ENCODE measurements at regions of chr1 and their contacts with region 1.

Region 1: DNA sequence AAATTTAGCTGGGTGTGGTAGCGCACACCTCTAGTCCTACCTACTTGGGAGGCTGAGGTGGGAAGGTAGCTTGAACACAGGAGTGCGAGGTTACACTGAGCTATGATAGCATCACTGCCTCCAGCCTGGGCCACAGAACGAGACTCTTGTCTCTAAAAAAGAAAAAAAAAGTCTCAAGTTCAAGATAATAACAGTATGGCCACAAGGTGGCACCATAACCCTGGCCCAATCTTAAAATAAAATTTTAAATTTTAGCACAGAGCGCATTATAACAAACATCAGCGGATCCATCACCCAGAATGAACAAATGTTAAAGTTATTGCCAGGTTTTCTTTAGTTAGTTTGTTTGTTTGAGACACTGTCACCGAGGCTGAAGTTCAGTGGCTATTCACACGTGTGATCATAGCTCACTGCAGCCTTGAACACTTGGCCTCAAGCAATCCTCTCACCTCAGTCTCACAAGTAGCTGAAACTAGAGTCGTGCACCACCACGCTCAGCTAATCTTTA is 2.9 kb upstream of the HTR6 start:
- DNase-seq: peak; percentile 68
- ATAC-seq: no peak
- H3K4me3 Mint-ChIP-seq: no peak overlapping the region
- H3K27ac Mint-ChIP-seq: no peak overlapping the region
- H3K4me1 Mint-ChIP-seq: peaks cover 22% of the 10 kb centered on the region
- H3K27me3 Mint-ChIP-seq: peaks cover 24% of the 10 kb centered on the region
- CTCF ChIP-seq: peak; percentile 88

Region 2: GRCh38 chr1:19651141-19651737 is 10.5 kb before region 1 on chr1:
- CTCF ChIA-PET with region 1: interaction called, 26 read pairs
- POLR2A ChIA-PET with region 1: interaction called, 6 read pairs
- intact Hi-C with region 1: no loop called
- DNase-seq: peak; percentile 68
- ATAC-seq: peak; percentile 69
- H3K4me3 Mint-ChIP-seq: no peak overlapping the region
- H3K27ac Mint-ChIP-seq: no peak overlapping the region
- H3K4me1 Mint-ChIP-seq: peaks cover 25% of the 10 kb centered on the region
- H3K27me3 Mint-ChIP-seq: no peaks in the 10 kb centered on the region
- CTCF ChIP-seq: peak; percentile 52

Region 3: DNA sequence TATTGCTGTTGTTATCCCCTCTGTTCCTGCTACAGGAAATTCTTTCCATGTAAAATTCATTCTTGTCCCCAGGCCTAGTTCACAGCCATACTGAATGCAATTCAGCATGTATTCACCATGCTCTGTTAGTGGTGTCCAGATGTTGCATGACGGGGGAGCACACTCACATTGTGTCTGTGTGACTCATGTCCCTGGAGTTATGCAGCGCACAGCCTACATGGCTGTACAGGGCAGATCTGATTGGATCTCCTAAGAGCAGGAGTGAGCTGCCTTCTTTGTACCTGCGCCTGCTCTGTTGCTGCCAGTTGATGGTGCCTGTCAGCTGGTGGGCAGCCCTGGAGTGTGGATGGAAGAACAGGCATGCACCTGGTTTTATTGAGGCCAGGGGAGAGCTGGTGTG is 20.5 kb after region 1 on chr1:
- CTCF ChIA-PET with region 1: interaction called, 21 read pairs
- POLR2A ChIA-PET with region 1: interaction called, 8 read pairs
- intact Hi-C with region 1: no loop called
- DNase-seq: no peak
- ATAC-seq: no peak
- H3K4me3 Mint-ChIP-seq: no peak overlapping the region
- H3K27ac Mint-ChIP-seq: no peak overlapping the region
- H3K4me1 Mint-ChIP-seq: no peaks in the 10 kb centered on the region
- H3K27me3 Mint-ChIP-seq: no peaks in the 10 kb centered on the region
- CTCF ChIP-seq: no peak

Region 4: GRCh38 chr1:19704247-19705113 is 42.7 kb after region 1 on chr1:
- CTCF ChIA-PET with region 1: interaction called, 137 read pairs
- POLR2A ChIA-PET with region 1: no interaction called
- intact Hi-C with region 1: loop called (anchors 2 kb)
- DNase-seq: peak; percentile 61
- ATAC-seq: peak; percentile 88
- H3K4me3 Mint-ChIP-seq: no peak overlapping the region
- H3K27ac Mint-ChIP-seq: no peak overlapping the region
- H3K4me1 Mint-ChIP-seq: peaks cover 2% of the 10 kb centered on the region
- H3K27me3 Mint-ChIP-seq: no peaks in the 10 kb centered on the region
- CTCF ChIP-seq: peak; percentile 91

Region 5: GRCh38 chr1:19728413-19729145 is 66.8 kb after region 1 on chr1:
- CTCF ChIA-PET with region 1: interaction called, 12 read pairs
- POLR2A ChIA-PET with region 1: no interaction called
- intact Hi-C with region 1: no loop called
- DNase-seq: no peak
- ATAC-seq: no peak
- H3K4me3 Mint-ChIP-seq: no peak overlapping the region
- H3K27ac Mint-ChIP-seq: no peak overlapping the region
- H3K4me1 Mint-ChIP-seq: no peaks in the 10 kb centered on the region
- H3K27me3 Mint-ChIP-seq: no peaks in the 10 kb centered on the region
- CTCF ChIP-seq: no peak

Measured in activated CD8-positive, alpha-beta T cell treated with anti-CD3 and anti-CD28 coated beads for 36 hours (primary cell).